ENCODE measurements at regions of chr21 and their contacts with region 1.

Region 1: GRCh38 chr21:42781150-42781970 is 98.0 kb downstream of the WDR4 start:
- DNase-seq: peak; percentile 34 to 68 (median 56)
- H3K4me3 ChIP-seq: peak overlapping the region; percentile 8
- H3K27ac ChIP-seq: peak overlapping the region; percentile 36 to 77
- H3K4me1 ChIP-seq: peaks cover 16% of the 10 kb centered on the region
- H3K27me3 ChIP-seq: no peaks in the 10 kb centered on the region
- CTCF ChIP-seq: no peak
- EP300 ChIP-seq: no peak
- POLR2A ChIP-seq: no peak

Region 2: DNA sequence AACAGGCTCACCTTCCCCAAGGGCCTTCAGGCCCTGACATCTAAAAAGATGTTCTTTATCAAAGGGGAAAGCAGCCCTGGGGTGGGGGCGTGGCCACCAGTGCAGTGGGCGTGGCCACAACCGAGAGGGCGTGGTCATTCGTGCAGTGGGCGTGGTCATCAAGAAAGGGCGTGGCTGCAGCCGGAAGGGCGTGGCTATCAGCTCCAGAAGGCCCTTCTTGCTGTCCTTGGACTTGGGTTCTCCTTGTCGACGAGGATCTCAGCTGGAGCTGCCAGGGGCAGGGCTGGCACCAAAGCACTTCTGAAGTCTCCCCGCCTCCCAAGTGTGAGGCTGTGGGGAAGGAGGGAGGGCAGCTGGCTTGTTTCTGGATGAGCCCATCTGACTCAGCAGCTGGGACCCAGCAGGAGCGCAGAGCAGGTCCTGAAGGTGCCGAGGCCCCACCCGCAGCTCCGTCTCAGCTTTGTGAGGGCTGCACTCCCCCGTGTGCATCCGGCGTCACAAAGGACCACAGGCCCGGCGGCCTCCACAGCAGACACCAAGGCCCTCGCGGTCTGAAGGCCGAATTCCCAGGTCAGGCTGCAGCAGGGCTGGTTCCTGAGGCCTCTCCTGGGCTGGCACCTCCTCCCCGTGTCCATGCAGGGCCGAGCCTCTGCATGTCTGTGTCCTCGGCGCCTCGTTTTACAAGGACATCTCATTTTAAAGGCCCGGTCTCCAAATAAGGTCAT is 115.2 kb before region 1 on chr21:
- intact Hi-C with region 1: no loop called
- DNase-seq: no peak
- H3K4me3 ChIP-seq: no peak overlapping the region
- H3K27ac ChIP-seq: no peak overlapping the region
- H3K4me1 ChIP-seq: peaks cover 5% of the 10 kb centered on the region
- H3K27me3 ChIP-seq: no peaks in the 10 kb centered on the region
- CTCF ChIP-seq: no peak
- EP300 ChIP-seq: no peak
- POLR2A ChIP-seq: no peak

Region 3: DNA sequence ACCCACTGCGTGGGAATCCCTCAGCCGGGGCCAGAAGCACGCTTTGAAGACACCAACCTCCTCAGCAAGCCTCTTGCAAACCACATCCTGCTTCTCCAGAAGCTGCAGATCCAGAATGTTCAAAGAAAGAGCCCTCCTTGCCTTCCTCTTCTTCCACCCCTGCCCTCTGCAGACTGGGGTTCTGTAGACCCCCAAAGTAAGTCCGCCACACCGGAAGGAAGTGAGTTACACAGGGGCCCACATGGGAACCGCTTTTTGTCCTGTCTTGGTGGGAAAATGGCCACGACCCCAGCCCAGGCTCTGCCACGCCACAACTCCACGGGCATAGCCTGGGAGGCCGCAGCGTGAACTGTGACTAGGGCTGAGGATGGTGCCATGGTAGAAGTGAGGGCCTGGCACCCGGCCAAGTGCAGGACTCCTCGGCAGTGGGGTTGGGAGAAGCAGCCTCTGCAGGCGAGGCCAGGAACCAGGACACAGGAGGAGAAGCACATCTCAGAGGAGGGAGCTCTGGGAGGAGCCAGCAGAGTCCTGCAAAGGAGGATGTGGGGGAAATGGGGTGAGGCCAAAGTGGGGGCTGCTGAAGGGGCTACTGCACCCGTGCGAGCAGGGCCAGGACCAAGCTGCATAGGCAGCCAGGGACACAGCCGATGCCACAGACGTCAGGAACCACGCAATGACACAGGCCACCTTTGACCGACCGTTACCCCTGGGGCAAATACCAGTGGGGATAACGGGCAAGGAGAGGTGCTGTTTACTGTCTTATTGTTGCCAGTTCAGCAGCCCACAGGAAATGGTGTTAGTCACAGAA is 97.0 kb before region 1 on chr21:
- intact Hi-C with region 1: loop called in 1 of 4 experiments (anchors 10 kb)
- DNase-seq: no peak
- H3K4me3 ChIP-seq: no peak overlapping the region
- H3K27ac ChIP-seq: no peak overlapping the region
- H3K4me1 ChIP-seq: no peaks in the 10 kb centered on the region
- H3K27me3 ChIP-seq: no peaks in the 10 kb centered on the region
- CTCF ChIP-seq: no peak
- EP300 ChIP-seq: no peak
- POLR2A ChIP-seq: no peak

Region 4: DNA sequence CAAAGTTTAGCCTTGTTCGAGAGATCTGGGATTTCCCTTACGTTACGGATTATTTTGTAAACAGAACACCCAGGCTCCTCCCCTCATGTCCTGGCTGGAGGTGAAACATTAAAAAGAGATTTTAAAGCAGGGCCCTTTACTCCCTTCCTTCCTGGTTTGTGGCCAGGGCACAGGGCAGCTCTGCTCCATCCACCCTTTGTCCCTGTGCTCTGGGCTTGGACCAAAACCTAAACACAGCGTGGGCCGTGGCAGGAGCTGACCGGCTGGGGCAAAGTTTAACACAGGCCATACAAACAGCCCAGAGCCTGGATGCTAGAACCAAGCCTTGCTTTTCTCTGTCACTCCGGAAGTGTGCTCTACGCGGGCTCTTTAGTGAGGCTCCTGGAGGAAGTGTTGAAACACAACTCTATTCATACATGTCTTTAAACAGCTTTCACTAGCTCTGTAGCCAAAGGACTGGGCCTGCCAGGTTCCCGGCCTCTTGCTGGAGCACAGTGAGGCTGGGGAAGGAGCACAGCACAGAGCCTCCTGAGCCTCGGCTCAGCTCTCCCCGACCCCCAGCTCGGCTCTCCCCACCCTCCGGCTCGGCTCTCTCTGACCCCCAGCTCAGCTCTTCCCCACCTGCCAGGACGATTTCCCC is 43.3 kb before region 1 on chr21:
- intact Hi-C with region 1: loop called in 1 of 4 experiments (anchors 10 kb)
- DNase-seq: peak; percentile 47 to 80 (median 55)
- H3K4me3 ChIP-seq: no peak overlapping the region
- H3K27ac ChIP-seq: peak overlapping the region in 1 of 2 donors; percentile 79
- H3K4me1 ChIP-seq: peaks cover 6% of the 10 kb centered on the region
- H3K27me3 ChIP-seq: no peaks in the 10 kb centered on the region
- CTCF ChIP-seq: no peak
- EP300 ChIP-seq: no peak
- POLR2A ChIP-seq: no peak

Measured in ovary (tissue), 10 donors.